ENCODE measurements at regions of chr1 and their contacts with region 1.

Region 1: DNA sequence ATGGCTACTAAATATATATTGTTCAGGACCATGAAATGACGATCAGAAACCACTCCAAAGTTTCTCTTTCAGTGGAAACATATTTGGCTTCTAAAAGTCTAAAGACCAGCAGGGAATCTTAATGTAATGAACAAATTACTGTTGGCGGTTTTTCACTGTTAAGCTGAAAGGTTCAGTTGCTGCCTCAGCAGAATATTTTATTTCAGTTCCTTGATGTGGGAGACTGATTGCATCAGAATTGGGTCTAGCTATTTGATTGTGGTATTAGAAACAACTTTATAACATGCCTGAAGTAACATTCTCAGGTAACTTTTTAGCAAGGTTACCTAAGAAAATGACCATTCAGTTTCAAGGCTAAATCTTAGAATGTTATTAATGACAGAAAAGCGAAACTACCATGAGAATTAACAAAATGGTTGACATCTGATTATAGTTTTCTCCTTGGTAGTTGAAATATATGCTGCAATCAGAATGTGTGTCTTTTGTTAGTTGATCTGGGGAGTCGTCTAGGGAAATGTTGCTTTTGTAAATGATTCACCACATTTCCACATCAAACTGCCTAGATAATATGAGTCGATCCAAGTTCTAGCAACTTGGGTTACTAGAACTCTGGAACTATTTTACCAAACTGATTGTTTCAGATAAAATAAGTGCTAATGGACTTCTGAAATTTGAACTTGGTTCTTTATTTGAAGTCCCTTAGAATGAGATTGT is 200.4 kb downstream of the HMCN1 start:
- DNase-seq: peak; percentile 81
- H3K4me3 ChIP-seq: peak overlapping the region; percentile 14
- H3K27ac ChIP-seq: peak overlapping the region; percentile 80
- H3K4me1 ChIP-seq: peaks cover 58% of the 10 kb centered on the region
- H3K27me3 ChIP-seq: no peaks in the 10 kb centered on the region
- CTCF ChIP-seq: no peak

Region 2: GRCh38 chr1:185790194-185790735 is 144.4 kb before region 1 on chr1:
- CTCF ChIA-PET with region 1: no interaction called
- POLR2A ChIA-PET with region 1: no interaction called
- intact Hi-C with region 1: no loop called
- DNase-seq: peak; percentile 48
- H3K4me3 ChIP-seq: no peak overlapping the region
- H3K27ac ChIP-seq: peak overlapping the region; percentile 61
- H3K4me1 ChIP-seq: peaks cover 62% of the 10 kb centered on the region
- H3K27me3 ChIP-seq: no peaks in the 10 kb centered on the region
- CTCF ChIP-seq: no peak

Region 3: GRCh38 chr1:185969028-185969427 is 34.4 kb after region 1 on chr1:
- CTCF ChIA-PET with region 1: no interaction called
- POLR2A ChIA-PET with region 1: no interaction called
- intact Hi-C with region 1: loop called (anchors 5 kb)
- DNase-seq: no peak
- H3K4me3 ChIP-seq: no peak overlapping the region
- H3K27ac ChIP-seq: no peak overlapping the region
- H3K4me1 ChIP-seq: peaks cover 25% of the 10 kb centered on the region
- H3K27me3 ChIP-seq: no peaks in the 10 kb centered on the region
- CTCF ChIP-seq: no peak

Measured in A673 (cell line).